Heart right ventricle (tissue), 16 donors: ENCODE measurements at regions of chr14 and their contacts with region 1.

Region 1: DNA sequence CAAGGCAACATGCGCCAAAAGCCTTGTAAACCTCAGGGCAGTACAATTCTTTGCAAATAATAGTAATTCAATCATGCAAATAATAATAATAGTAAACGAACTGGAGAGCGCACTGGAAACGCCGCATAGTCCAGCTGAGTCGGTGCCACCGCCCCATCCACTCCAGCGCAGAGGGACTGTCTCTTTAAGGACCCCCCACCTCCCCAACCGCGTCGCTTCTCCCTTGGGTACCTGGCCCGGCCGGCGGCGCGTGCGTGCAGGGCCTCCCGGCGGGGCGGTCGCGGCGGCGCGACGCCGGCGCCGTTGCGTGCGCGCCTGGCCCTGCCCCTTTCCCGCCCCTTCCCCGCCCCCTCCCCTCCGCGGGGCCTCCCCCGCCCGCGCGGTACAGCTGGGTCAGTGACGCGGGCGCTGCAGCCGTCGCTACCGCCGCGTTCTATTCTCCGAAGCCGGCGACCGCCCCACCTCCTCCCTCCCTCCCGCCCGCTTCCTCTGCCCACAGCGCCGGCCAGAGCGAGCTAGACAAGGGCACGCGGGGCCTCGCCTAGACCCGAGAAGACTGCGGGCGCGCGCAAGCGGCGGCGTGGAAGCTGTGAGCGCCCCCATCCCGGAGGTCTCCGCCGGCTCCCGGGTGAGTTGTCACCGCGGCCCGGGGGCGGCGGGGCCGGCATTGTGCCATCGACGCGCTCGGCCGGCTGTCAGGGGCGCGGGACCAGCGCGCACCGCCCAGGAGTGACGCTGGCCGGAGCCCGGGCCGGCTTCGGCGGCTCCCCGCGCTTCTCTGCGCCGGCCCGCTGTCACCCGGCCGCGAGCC is at the start of gene SUSD6:
- DNase-seq: peak; percentile 91 to 93
- ATAC-seq: peak; percentile 84 to 94 (median 89)
- H3K4me3 ChIP-seq: peak within 1 kb of the TSS; percentile 73 to 91 (median 84)
- H3K27ac ChIP-seq: peak within 1 kb of the TSS; percentile 93 to 99 (median 98)
- H3K4me1 ChIP-seq: peaks cover 17 to 68% (median 53%) of the 10 kb centered on the region in 9 donors
- H3K27me3 ChIP-seq: no peaks in the 10 kb centered on the region
- CTCF ChIP-seq: no peak
- total RNA-seq, gene SUSD6: 18.0 to 46.3 (median 25.5) TPM

Region 2: DNA sequence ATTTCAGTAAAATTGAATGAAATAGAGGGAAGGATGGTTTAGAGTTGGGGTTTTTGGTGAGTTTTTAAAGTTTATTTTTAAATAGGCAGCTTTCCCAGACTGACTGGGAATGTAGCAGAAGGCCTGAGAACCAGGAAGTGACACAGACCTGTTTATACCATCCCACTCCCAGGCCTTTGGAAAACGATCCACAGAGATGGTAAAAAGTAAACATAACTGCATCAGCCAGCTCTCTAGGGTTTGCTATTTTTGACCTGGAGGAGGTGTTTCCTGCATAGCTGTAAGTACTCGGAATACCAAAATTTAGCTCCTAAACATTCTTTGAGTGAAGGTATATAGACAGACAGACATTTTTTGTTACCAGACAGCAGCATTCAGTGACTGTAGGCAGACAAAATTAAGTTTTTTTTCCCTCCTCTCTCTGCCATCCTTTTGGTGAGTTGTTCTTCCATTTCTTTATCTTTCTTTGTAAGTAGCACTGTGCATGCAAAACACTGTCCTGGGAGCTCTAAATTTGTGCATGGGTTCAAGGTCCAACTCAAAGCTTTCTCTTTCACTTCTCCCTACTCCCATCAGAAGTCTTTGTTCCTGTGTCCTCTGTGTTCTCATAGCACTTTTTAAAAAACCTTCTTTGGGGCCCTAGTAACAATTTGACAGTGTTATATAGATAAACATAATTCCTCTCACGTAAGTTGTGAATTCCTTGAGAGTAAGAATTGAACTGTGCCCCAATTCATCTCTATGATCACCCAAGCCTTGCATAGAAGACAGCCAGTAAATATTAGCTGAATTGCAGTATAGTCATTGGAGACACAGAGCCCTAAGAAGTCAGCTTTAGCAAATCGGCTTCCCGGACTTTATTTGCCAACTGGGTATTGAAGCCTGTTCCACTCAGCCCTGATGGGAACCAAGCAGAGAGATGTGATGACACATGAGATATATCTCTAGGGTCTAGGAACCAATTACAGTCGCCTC is 37.4 kb after region 1 on chr14:
- intact Hi-C with region 1: loop called in 6 of 10 experiments (anchors 5 kb)
- DNase-seq: no peak
- ATAC-seq: peak in 7 of 8 donors; percentile 33 to 60 (median 51)
- H3K4me3 ChIP-seq: peak overlapping the region in 5 of 10 donors; percentile 0 to 26 (median 10)
- H3K27ac ChIP-seq: peak overlapping the region; percentile 37 to 91 (median 78)
- H3K4me1 ChIP-seq: peaks cover 36 to 100% (median 84%) of the 10 kb centered on the region in 9 donors
- H3K27me3 ChIP-seq: no peaks in the 10 kb centered on the region
- CTCF ChIP-seq: no peak

Region 3: DNA sequence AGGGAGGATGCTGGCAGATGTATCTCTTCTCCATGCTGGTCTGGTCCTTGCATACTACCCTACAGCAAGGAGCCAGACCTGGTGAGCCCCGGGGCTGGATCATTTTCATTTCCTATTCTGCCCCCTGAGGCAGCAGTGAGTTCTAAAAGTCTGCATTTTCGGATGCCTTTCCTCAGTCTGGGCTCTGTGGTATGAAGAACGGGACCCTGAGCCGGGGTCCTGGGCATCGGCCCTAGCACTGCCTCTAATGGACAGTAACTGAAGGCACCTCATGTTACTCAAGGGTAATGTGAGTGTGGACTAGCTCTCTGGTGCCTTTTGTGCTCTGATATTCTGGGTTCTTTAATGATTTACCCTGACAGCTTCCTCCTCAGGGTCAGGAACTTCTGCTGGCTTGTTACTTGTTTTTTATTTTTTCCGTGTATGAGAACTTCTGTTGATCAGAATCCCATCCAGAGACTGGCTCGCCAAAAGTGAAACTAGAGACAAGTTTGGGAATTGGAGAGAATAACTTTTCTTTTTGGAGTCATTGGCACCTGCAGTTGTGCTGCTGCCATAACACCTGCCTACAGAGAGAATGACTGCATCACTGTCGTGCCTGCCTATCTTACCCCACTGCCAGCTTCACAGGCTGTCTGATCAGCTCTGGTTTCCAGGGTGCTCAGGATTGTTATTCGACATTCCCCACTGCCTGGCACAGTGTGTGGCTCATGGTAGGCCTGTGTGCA is 62.3 kb after region 1 on chr14:
- intact Hi-C with region 1: loop called in 6 of 10 experiments (anchors 5 to 10 kb)
- DNase-seq: no peak
- ATAC-seq: peak in 7 of 8 donors; percentile 19 to 51 (median 27)
- H3K4me3 ChIP-seq: peak overlapping the region in 3 of 10 donors; percentile 9 to 35 (median 24)
- H3K27ac ChIP-seq: peak overlapping the region; percentile 24 to 78 (median 70)
- H3K4me1 ChIP-seq: peaks cover 43 to 98% (median 79%) of the 10 kb centered on the region in 9 donors
- H3K27me3 ChIP-seq: no peaks in the 10 kb centered on the region
- CTCF ChIP-seq: peak in 1 of 9 donors; percentile 9

Region 4: GRCh38 chr14:69720912-69721311 is 109.5 kb after region 1 on chr14:
- intact Hi-C with region 1: loop called in 5 of 10 experiments (anchors 2 to 5 kb)
- DNase-seq: no peak
- ATAC-seq: no peak
- H3K4me3 ChIP-seq: no peak overlapping the region
- H3K27ac ChIP-seq: no peak overlapping the region
- H3K4me1 ChIP-seq: peaks cover 9 to 56% (median 37%) of the 10 kb centered on the region in 9 donors
- H3K27me3 ChIP-seq: no peaks in the 10 kb centered on the region
- CTCF ChIP-seq: peak in 1 of 9 donors; percentile 10

Region 5: GRCh38 chr14:69749956-69750355 is 138.6 kb after region 1 on chr14:
- intact Hi-C with region 1: no loop called
- DNase-seq: no peak
- ATAC-seq: no peak
- H3K4me3 ChIP-seq: no peak overlapping the region
- H3K27ac ChIP-seq: no peak overlapping the region
- H3K4me1 ChIP-seq: no peaks in the 10 kb centered on the region
- H3K27me3 ChIP-seq: no peaks in the 10 kb centered on the region
- CTCF ChIP-seq: no peak

Region 6: DNA sequence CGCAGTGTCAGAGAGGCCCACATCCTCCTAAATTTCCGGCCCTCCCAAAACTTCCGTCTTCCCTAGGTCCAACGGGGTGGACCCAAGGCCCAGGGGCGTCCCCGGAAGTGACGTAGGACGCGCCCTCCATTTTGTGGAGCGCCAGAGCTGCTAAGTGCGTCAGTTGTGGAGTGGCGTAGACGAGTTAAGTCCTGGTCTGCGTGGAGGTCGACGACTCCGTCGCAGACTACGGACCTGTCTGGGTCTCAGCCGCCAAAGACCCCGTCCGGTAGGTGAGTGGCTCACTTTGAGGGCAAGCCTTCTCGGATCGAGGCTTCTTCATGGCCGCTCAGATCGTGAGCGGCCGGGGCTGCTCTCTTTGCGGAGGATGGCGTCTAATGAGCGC is 155.6 kb after region 1 on chr14 and contains the start of gene SRSF5:
- intact Hi-C with region 1: loop called in 1 of 10 experiments (anchors 1 kb)
- DNase-seq: peak; percentile 95 to 97
- ATAC-seq: peak; percentile 96 to 99 (median 98)
- H3K4me3 ChIP-seq: peak within 1 kb of the TSS; percentile 82 to 97 (median 92)
- H3K27ac ChIP-seq: peak within 1 kb of the TSS; percentile 98 to 100 (median 100)
- H3K4me1 ChIP-seq: peaks cover 0 to 49% (median 46%) of the 10 kb centered on the region in 9 donors
- H3K27me3 ChIP-seq: no peaks in the 10 kb centered on the region
- CTCF ChIP-seq: no peak
- total RNA-seq, gene SRSF5: 149 to 221 (median 173) TPM